CD4-positive, alpha-beta memory T cell (primary cell): ENCODE measurements at regions of chr6 and their contacts with region 1.

Region 1: DNA sequence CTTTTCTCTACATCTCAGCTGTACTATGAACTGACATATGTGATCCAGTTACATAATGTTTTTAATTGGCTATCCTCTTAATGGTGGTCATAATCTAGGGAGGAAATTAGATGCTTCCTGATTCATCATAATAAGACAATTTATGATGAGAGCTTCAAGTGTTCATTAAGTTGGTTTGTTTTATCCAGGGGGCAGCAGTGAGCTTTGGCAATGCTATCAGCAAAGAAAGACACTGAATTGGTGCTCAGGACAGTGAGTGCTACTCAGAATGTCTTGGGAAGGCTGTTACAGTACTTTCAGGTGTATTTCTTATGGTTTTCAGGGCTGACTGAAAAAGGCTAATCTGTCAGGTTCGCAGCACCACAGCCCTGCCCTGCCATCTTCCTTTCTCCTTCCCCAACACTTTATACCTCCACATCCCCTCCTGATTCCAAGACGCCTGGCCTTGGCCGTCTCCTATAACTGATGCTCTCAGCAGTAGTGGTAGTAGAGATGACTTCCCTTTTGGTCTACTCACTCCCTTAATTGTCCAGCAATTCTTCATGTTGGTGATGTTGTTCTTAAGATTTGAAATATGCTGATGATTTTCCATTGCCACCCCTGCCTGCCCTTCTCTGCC is 67.0 kb upstream of the TNFAIP3 start:
- DNase-seq: peak; percentile 76 to 82 (median 80)
- H3K4me3 ChIP-seq: no peak overlapping the region
- H3K4me3 Mint-ChIP-seq: peak overlapping the region in 3 of 8 donors; percentile 4 to 30 (median 11)
- H3K27ac ChIP-seq: peak overlapping the region; percentile 36
- H3K27ac Mint-ChIP-seq: peak overlapping the region; percentile 28 to 98 (median 93)
- H3K4me1 ChIP-seq: peaks cover 41% of the 10 kb centered on the region
- H3K4me1 Mint-ChIP-seq: peaks cover 30 to 59% (median 43%) of the 10 kb centered on the region in 4 donors
- H3K27me3 ChIP-seq: no peaks in the 10 kb centered on the region
- H3K27me3 Mint-ChIP-seq: no peaks in the 10 kb centered on the region

Region 2: DNA sequence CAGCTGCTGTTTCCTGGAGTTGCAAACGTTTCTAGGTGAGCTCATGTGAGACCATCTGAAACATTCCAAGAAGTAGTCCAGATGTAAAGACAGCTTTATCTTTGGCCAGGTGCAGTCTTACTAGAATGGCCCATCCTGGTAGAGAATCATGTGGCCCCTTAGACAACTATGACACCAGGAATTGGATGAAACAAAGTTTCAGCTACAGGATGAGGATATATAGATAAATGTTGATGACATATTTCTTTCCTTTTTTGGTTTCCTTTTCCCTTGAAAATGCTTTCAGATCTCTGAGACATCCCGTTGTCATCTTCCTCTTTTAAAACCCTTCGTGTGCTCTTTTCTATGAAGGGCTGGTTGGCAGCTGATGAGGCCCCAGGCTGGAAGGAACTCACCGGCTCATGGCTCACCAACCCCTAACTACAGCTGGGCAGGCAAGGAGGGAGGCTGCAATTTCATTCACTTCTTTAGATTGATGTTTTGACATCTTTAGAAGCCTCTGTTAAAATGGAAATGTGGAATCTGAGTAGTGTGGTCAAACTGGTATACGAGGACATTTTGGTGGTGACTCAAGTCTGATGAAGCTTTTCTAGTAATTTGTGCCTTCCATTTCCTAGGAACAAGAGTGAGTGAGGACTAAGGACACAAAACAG is 100.9 kb before region 1 on chr6:
- CTCF ChIA-PET with region 1: interaction called, 18 read pairs
- POLR2A ChIA-PET with region 1: interaction called, 3 read pairs
- intact Hi-C with region 1: no loop called
- DNase-seq: peak in 1 of 5 donors; percentile 15
- H3K4me3 ChIP-seq: no peak overlapping the region
- H3K4me3 Mint-ChIP-seq: peak overlapping the region in 5 of 8 donors; percentile 2 to 77 (median 56)
- H3K27ac ChIP-seq: no peak overlapping the region
- H3K27ac Mint-ChIP-seq: peak overlapping the region in 6 of 7 donors; percentile 61 to 95 (median 88)
- H3K4me1 ChIP-seq: peaks cover 19% of the 10 kb centered on the region
- H3K4me1 Mint-ChIP-seq: peaks cover 12 to 24% (median 18%) of the 10 kb centered on the region in 4 donors
- H3K27me3 ChIP-seq: no peaks in the 10 kb centered on the region
- H3K27me3 Mint-ChIP-seq: peaks cover 0 to 8% of the 10 kb centered on the region in 2 donors

Region 3: GRCh38 chr6:137811121-137811915 is 11.3 kb after region 1 on chr6:
- CTCF ChIA-PET with region 1: interaction called, 26 read pairs
- POLR2A ChIA-PET with region 1: interaction called, 6 read pairs
- intact Hi-C with region 1: loop called (anchors 1 kb)
- DNase-seq: peak; percentile 68 to 93 (median 75)
- H3K4me3 ChIP-seq: peak overlapping the region in 1 of 2 donors; percentile 25
- H3K4me3 Mint-ChIP-seq: peak overlapping the region in 7 of 8 donors; percentile 47 to 86 (median 77)
- H3K27ac ChIP-seq: peak overlapping the region; percentile 65
- H3K27ac Mint-ChIP-seq: peak overlapping the region; percentile 83 to 98 (median 95)
- H3K4me1 ChIP-seq: peaks cover 28% of the 10 kb centered on the region
- H3K4me1 Mint-ChIP-seq: peaks cover 23 to 38% (median 30%) of the 10 kb centered on the region in 4 donors
- H3K27me3 ChIP-seq: no peaks in the 10 kb centered on the region
- H3K27me3 Mint-ChIP-seq: no peaks in the 10 kb centered on the region

Region 4: GRCh38 chr6:137866914-137867684 is 67.0 kb after region 1 on chr6 and contains the start of gene TNFAIP3:
- CTCF ChIA-PET with region 1: interaction called, 91 read pairs
- POLR2A ChIA-PET with region 1: interaction called, 112 read pairs
- intact Hi-C with region 1: loop called (anchors 1 kb)
- DNase-seq: peak; percentile 96 to 97 (median 97)
- H3K4me3 ChIP-seq: peak within 1 kb of the TSS; percentile 78 to 93
- H3K4me3 Mint-ChIP-seq: peak within 1 kb of the TSS; percentile 89 to 100 (median 96)
- H3K27ac ChIP-seq: peak within 1 kb of the TSS; percentile 99
- H3K27ac Mint-ChIP-seq: peak within 1 kb of the TSS; percentile 96 to 99 (median 99)
- H3K4me1 ChIP-seq: peaks cover 32% of the 10 kb centered on the region
- H3K4me1 Mint-ChIP-seq: peaks cover 29 to 68% (median 42%) of the 10 kb centered on the region in 4 donors
- H3K27me3 ChIP-seq: no peaks in the 10 kb centered on the region
- H3K27me3 Mint-ChIP-seq: peaks cover 0 to 4% of the 10 kb centered on the region in 2 donors
- total RNA-seq, gene TNFAIP3: 145 to 165 TPM

Region 5: GRCh38 chr6:137944793-137945498 is 144.9 kb after region 1 on chr6:
- CTCF ChIA-PET with region 1: interaction called, 122 read pairs
- POLR2A ChIA-PET with region 1: interaction called, 10 read pairs
- intact Hi-C with region 1: loop called (anchors 1 kb)
- DNase-seq: peak in 4 of 5 donors; percentile 41 to 56 (median 48)
- H3K4me3 ChIP-seq: no peak overlapping the region
- H3K4me3 Mint-ChIP-seq: peak overlapping the region in 1 of 8 donors; percentile 12
- H3K27ac ChIP-seq: no peak overlapping the region
- H3K27ac Mint-ChIP-seq: peak overlapping the region in 5 of 7 donors; percentile 10 to 67 (median 63)
- H3K4me1 ChIP-seq: peaks cover 16% of the 10 kb centered on the region
- H3K4me1 Mint-ChIP-seq: peaks cover 13 to 22% (median 19%) of the 10 kb centered on the region in 4 donors
- H3K27me3 ChIP-seq: no peaks in the 10 kb centered on the region
- H3K27me3 Mint-ChIP-seq: no peaks in the 10 kb centered on the region

Region 6: GRCh38 chr6:138109042-138109997 is 309.3 kb after region 1 on chr6:
- CTCF ChIA-PET with region 1: no interaction called
- POLR2A ChIA-PET with region 1: no interaction called
- intact Hi-C with region 1: loop called (anchors 1 kb)
- DNase-seq: peak; percentile 69 to 75 (median 75)
- H3K4me3 ChIP-seq: no peak overlapping the region
- H3K4me3 Mint-ChIP-seq: peak overlapping the region in 2 of 8 donors; percentile 52 to 55
- H3K27ac ChIP-seq: no peak overlapping the region
- H3K27ac Mint-ChIP-seq: peak overlapping the region in 3 of 7 donors; percentile 8 to 65 (median 11)
- H3K4me1 ChIP-seq: peaks cover 25% of the 10 kb centered on the region
- H3K4me1 Mint-ChIP-seq: peaks cover 16 to 37% (median 17%) of the 10 kb centered on the region in 4 donors
- H3K27me3 ChIP-seq: no peaks in the 10 kb centered on the region
- H3K27me3 Mint-ChIP-seq: peaks cover 3% of the 10 kb centered on the region in 2 donors